ENCODE measurements at regions of chr11 and their contacts with region 1.

Region 1: GRCh38 chr11:13210424-13210823 is 67.2 kb upstream of the BMAL1 start:
- ATAC-seq: peak; percentile 13 to 86 (median 55)
- H3K4me3 ChIP-seq: no peak overlapping the region
- H3K27ac ChIP-seq: no peak overlapping the region
- H3K4me1 ChIP-seq: peaks cover 26 to 32% of the 10 kb centered on the region in 2 donors

Region 2: DNA sequence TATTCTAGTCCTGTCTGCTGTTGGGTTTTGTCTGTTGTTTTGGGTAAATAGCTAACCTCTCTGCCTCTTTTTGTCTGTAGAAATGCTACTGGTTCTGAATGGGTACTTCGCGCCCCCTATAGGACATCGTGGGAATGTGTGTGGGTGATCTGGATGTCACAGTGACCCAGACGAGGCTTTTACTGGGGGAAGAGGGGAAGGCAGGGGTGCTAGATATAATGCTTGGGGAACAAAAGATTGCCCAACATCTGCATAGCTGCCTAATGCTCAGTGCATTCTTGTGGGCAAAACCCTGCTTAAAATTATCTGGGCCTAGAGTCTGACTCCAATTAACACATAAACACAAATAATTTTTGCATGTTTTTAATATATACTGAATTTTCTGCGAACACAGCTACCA is 124.9 kb after region 1 on chr11:
- in situ Hi-C with region 1: loop called in 6 of 9 experiments (anchors 10 to 25 kb)
- ATAC-seq: peak in 4 of 8 experiments; percentile 23 to 81 (median 45)
- H3K4me3 ChIP-seq: no peak overlapping the region
- H3K27ac ChIP-seq: no peak overlapping the region
- H3K4me1 ChIP-seq: peaks cover under 1% of the 10 kb centered on the region in 2 donors

Measured in motor neuron (in vitro differentiated cells).